ENCODE measurements at regions of chr9 and their contacts with region 1.

Region 1: DNA sequence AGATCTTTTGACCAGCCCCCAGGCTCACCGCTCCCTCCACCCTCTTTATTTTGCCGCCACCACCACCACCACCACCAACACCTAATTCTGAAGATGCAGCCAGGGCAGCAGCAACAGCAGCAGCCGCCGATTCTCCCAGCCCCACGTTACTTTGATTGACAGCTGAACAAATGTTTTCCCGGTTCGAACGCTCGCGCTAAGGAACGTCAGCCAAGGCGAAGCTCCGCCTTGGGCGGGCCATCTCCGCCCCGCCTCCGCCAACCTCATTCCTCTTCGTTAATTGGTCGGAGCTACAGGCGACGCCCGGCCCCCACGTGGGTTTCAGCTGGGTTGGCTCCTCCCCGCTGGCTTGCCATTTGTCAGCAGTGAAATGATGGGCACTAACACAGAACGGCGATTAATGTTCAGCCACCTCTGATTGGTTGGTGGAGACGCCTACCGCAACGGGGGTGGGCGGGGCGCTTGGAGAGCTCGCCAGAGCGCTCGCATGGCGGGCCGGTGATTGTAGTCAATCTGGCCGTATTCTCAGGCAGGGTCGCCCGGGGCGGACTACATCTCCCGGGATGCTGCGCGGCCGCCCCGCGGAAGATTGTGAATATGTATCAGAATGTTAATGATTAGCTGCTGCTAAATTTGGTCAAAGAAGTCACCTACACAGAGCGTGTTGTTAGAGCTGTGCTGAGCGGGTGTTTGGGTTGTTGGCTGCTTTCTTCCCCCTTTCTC is at the start of gene TLE4:
- DNase-seq: peak; percentile 100
- ATAC-seq: peak; percentile 84
- H3K4me3 ChIP-seq: peak within 1 kb of the TSS; percentile 89
- H3K27ac ChIP-seq: peak within 1 kb of the TSS; percentile 82
- H3K4me1 ChIP-seq: peaks cover 17% of the 10 kb centered on the region
- H3K27me3 ChIP-seq: no peaks in the 10 kb centered on the region
- CTCF ChIP-seq: no peak
- EP300 ChIP-seq: no peak
- POLR2A ChIP-seq: peak; percentile 81
- RAD21 ChIP-seq: no peak
- polyA plus RNA-seq, gene TLE4: 5.3 to 6.6 TPM

Region 2: DNA sequence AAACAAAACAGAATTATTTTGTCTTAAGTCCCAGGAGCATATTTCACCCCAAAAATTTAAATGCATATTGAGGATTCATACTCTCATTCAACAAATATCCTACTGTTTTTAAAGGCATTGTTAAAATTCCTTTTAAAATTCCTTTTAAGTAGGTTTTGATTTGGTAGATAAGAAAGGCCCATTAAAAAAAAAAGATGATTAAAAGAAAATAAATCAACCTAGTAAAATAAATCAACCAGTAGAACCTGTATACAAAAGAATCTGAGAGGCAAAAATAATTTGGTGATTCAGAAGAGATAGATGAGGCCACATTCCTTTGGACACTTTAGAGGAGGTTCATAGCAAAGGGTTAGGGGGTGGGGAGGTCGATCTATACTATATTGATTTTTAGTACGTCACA is 585.0 kb before region 1 on chr9:
- CTCF ChIA-PET with region 1: no interaction called
- POLR2A ChIA-PET with region 1: no interaction called
- RAD21 ChIA-PET with region 1: no interaction called
- SMC1A ChIA-PET with region 1: no interaction called
- in situ Hi-C with region 1: no loop called
- intact Hi-C with region 1: no loop called
- DNase-seq: no peak
- ATAC-seq: no peak
- H3K4me3 ChIP-seq: no peak overlapping the region
- H3K27ac ChIP-seq: no peak overlapping the region
- H3K4me1 ChIP-seq: no peaks in the 10 kb centered on the region
- H3K27me3 ChIP-seq: no peaks in the 10 kb centered on the region
- CTCF ChIP-seq: no peak
- EP300 ChIP-seq: no peak
- POLR2A ChIP-seq: no peak
- RAD21 ChIP-seq: no peak

Region 3: GRCh38 chr9:79477955-79478771 is 93.3 kb before region 1 on chr9:
- CTCF ChIA-PET with region 1: interaction called, 10 read pairs
- POLR2A ChIA-PET with region 1: interaction called, 4 read pairs
- RAD21 ChIA-PET with region 1: interaction called, 10 read pairs
- SMC1A ChIA-PET with region 1: interaction called, 5 read pairs
- in situ Hi-C with region 1: no loop called
- intact Hi-C with region 1: loop called (anchors 1 kb)
- DNase-seq: no peak
- ATAC-seq: peak; percentile 96
- H3K4me3 ChIP-seq: no peak overlapping the region
- H3K27ac ChIP-seq: no peak overlapping the region
- H3K4me1 ChIP-seq: no peaks in the 10 kb centered on the region
- H3K27me3 ChIP-seq: no peaks in the 10 kb centered on the region
- CTCF ChIP-seq: peak; percentile 43 to 63 (median 57); a peak in 5 of 6 replicates
- EP300 ChIP-seq: no peak
- POLR2A ChIP-seq: no peak
- RAD21 ChIP-seq: peak; percentile 60

Region 4: DNA sequence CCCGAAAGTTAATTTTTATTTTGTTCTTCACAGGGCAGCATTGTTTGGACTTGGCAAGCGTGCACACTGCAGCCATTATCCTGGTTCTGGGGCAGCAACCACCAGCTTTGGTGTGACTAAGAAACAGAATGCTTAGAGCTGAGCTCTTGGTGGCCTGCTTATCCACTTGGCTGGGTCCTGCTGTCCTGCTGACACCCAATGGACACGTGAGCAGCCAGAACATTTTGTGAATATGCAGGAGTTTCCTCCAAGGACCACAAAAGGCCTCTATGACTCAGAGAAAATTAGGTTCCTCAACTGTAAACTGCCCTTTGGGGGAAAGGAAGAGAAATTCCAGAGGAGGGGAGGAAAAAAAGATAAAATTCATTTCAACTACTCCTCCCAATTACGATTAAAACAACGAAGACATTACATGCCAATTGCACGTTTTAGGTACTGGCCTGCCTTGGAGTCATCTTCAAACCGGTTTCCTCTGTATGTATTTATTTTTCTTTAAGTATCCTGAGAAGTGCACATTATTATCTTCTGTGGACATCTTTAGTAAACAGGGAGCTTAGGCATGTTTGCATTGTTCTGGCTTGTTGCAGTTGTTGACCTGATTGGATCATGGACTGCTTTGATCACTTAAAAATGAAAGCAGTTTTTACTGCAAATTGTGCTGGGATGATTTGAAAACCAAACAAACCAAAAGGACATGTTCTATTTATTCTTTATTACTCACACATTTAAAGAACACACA is 82.1 kb before region 1 on chr9:
- CTCF ChIA-PET with region 1: no interaction called
- POLR2A ChIA-PET with region 1: no interaction called
- RAD21 ChIA-PET with region 1: no interaction called
- SMC1A ChIA-PET with region 1: no interaction called
- in situ Hi-C with region 1: no loop called
- intact Hi-C with region 1: no loop called
- DNase-seq: no peak
- ATAC-seq: no peak
- H3K4me3 ChIP-seq: no peak overlapping the region
- H3K27ac ChIP-seq: no peak overlapping the region
- H3K4me1 ChIP-seq: no peaks in the 10 kb centered on the region
- H3K27me3 ChIP-seq: no peaks in the 10 kb centered on the region
- CTCF ChIP-seq: no peak
- EP300 ChIP-seq: no peak
- POLR2A ChIP-seq: no peak
- RAD21 ChIP-seq: no peak

Region 5: GRCh38 chr9:79592726-79593493 is 21.4 kb after region 1 on chr9:
- CTCF ChIA-PET with region 1: interaction called, 3 read pairs
- POLR2A ChIA-PET with region 1: interaction called, 3 read pairs
- RAD21 ChIA-PET with region 1: interaction called, 7 read pairs
- SMC1A ChIA-PET with region 1: interaction called, 7 read pairs
- in situ Hi-C with region 1: no loop called
- intact Hi-C with region 1: loop called (anchors 2 kb)
- DNase-seq: no peak
- ATAC-seq: peak; percentile 76
- H3K4me3 ChIP-seq: no peak overlapping the region
- H3K27ac ChIP-seq: no peak overlapping the region
- H3K4me1 ChIP-seq: peaks cover 16% of the 10 kb centered on the region
- H3K27me3 ChIP-seq: no peaks in the 10 kb centered on the region
- CTCF ChIP-seq: no peak
- EP300 ChIP-seq: peak in 1 of 2 experiments; percentile 56; a peak in 1 of 4 replicates
- POLR2A ChIP-seq: no peak
- RAD21 ChIP-seq: no peak

Region 6: GRCh38 chr9:79630521-79631403 is 59.3 kb after region 1 on chr9:
- CTCF ChIA-PET with region 1: interaction called, 7 read pairs
- POLR2A ChIA-PET with region 1: interaction called, 29 read pairs
- RAD21 ChIA-PET with region 1: interaction called, 16 read pairs
- SMC1A ChIA-PET with region 1: interaction called, 21 read pairs
- in situ Hi-C with region 1: no loop called
- intact Hi-C with region 1: no loop called
- DNase-seq: peak; percentile 49
- ATAC-seq: peak; percentile 93
- H3K4me3 ChIP-seq: peak overlapping the region; percentile 31; the same call in 1 of the 2 replicates
- H3K27ac ChIP-seq: peak overlapping the region; percentile 30; the same call in 1 of the 2 replicates
- H3K4me1 ChIP-seq: peaks cover 8% of the 10 kb centered on the region
- H3K27me3 ChIP-seq: no peaks in the 10 kb centered on the region
- CTCF ChIP-seq: no peak
- EP300 ChIP-seq: peak; percentile 60 to 94
- POLR2A ChIP-seq: no peak
- RAD21 ChIP-seq: no peak

Region 7: DNA sequence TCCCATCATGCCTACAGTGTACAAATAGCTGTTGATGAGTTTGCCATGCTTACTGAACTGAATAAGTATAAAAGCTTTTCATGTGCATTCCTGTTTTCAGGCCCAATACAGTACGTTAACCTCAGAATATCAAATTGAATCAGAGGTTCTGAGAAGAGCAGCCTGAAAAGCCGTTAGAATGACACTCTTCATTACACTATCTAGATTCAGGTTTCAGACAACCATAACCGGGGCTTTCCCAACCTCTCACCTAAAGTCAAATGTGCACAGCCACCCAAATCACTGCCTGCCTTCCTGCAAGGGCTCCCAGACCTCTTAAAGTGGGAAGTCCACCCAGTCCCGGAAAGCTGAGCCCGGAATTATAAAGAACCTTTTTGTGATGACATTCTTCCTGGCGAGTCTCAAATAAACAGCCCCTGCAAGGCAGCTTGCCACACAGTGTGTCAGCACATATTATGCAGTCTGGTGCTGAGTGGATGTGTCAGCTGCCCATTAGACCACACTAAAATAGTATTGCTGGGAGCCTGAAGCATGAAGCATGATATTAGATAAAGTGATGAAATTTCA is 246.1 kb after region 1 on chr9:
- CTCF ChIA-PET with region 1: no interaction called
- POLR2A ChIA-PET with region 1: no interaction called
- RAD21 ChIA-PET with region 1: no interaction called
- SMC1A ChIA-PET with region 1: interaction called, 7 read pairs
- in situ Hi-C with region 1: no loop called
- intact Hi-C with region 1: loop called (anchors 5 kb)
- DNase-seq: no peak
- ATAC-seq: peak; percentile 95
- H3K4me3 ChIP-seq: no peak overlapping the region
- H3K27ac ChIP-seq: no peak overlapping the region
- H3K4me1 ChIP-seq: peaks cover 5% of the 10 kb centered on the region; the same call in 1 of the 2 replicates
- H3K27me3 ChIP-seq: no peaks in the 10 kb centered on the region
- CTCF ChIP-seq: no peak
- EP300 ChIP-seq: no peak
- POLR2A ChIP-seq: no peak
- RAD21 ChIP-seq: no peak

Measured in GM12878 (cell line).